Right cardiac atrium (tissue), 5 donors: ENCODE measurements at regions of chr4 and their contacts with region 1.

Region 1: GRCh38 chr4:23889814-23890341 is at the start of gene PPARGC1A:
- DNase-seq: peak; percentile 59 to 72 (median 63)
- ATAC-seq: peak; percentile 88 to 93
- H3K4me3 ChIP-seq: peak within 1 kb of the TSS; percentile 94
- H3K27ac ChIP-seq: peak within 1 kb of the TSS; percentile 99
- H3K4me1 ChIP-seq: no peaks in the 10 kb centered on the region
- H3K27me3 ChIP-seq: no peaks in the 10 kb centered on the region
- total RNA-seq, gene PPARGC1A: 74.7 to 130 (median 82.0) TPM

Region 2: GRCh38 chr4:23819041-23819511 is 70.8 kb before region 1 on chr4:
- intact Hi-C with region 1: loop called in 1 of 4 experiments (anchors 10 kb)
- DNase-seq: peak; percentile 38 to 81 (median 68)
- ATAC-seq: peak; percentile 73 to 95
- H3K4me3 ChIP-seq: no peak overlapping the region
- H3K27ac ChIP-seq: peak overlapping the region; percentile 42
- H3K4me1 ChIP-seq: peaks cover 2% of the 10 kb centered on the region
- H3K27me3 ChIP-seq: no peaks in the 10 kb centered on the region

Region 3: DNA sequence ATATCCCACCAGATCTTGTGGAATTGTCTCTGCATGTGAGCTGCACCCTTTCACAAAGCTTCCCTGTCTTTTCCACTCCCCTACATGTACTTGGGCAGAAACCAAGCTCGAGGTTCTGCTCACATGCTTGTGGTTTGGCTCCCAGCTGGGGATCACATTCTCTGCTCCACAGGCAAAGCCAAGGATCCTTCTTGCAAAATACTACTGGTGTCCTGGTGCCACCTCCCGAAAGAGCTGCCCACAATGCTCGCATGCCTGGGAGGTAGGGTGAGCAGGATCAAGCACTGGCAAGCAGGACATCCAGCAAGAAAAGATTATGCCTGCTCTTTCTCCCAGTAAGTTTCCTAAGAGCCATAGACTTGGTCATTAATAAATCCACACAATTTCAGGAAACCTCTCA is 45.0 kb after region 1 on chr4:
- intact Hi-C with region 1: loop called in 1 of 4 experiments (anchors 5 kb)
- DNase-seq: peak; percentile 68 to 78 (median 70)
- ATAC-seq: peak; percentile 61 to 66
- H3K4me3 ChIP-seq: no peak overlapping the region
- H3K27ac ChIP-seq: peak overlapping the region; percentile 71
- H3K4me1 ChIP-seq: peaks cover 13% of the 10 kb centered on the region
- H3K27me3 ChIP-seq: no peaks in the 10 kb centered on the region